Calu3 (cell line): ENCODE measurements at regions of chr4 and their contacts with region 1.

Region 1: GRCh38 chr4:158826057-158826456 is 57.2 kb downstream of the FNIP2 start:
- DNase-seq: no peak
- H3K4me3 Mint-ChIP-seq: peak overlapping the region; percentile 69
- H3K27ac Mint-ChIP-seq: peak overlapping the region; percentile 99
- H3K4me1 Mint-ChIP-seq: peaks cover 78% of the 10 kb centered on the region
- H3K27me3 Mint-ChIP-seq: no peaks in the 10 kb centered on the region
- CTCF ChIP-seq: no peak

Region 2: DNA sequence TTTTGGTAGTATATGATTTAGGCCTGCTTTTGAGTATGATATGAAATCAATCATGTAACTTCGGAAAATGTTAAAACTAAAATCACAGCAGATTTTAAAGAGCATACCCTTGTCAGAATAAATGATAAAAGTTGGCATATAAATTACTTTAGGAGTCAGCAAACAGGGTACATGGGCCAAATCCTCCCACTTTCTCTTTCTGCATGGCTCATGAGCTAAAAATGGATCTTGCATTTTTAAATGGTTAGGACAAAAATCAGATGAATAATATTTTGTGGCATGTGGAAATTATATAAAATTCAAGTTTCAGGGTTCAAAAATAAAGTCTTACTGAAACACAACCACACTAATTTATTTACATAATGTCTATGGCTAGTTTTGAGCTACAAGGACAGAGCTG is 868.2 kb before region 1 on chr4:
- CTCF ChIA-PET with region 1: no interaction called
- intact Hi-C with region 1: no loop called
- DNase-seq: no peak
- H3K4me3 Mint-ChIP-seq: no peak overlapping the region
- H3K27ac Mint-ChIP-seq: no peak overlapping the region
- H3K4me1 Mint-ChIP-seq: no peaks in the 10 kb centered on the region
- H3K27me3 Mint-ChIP-seq: no peaks in the 10 kb centered on the region
- CTCF ChIP-seq: no peak

Region 3: DNA sequence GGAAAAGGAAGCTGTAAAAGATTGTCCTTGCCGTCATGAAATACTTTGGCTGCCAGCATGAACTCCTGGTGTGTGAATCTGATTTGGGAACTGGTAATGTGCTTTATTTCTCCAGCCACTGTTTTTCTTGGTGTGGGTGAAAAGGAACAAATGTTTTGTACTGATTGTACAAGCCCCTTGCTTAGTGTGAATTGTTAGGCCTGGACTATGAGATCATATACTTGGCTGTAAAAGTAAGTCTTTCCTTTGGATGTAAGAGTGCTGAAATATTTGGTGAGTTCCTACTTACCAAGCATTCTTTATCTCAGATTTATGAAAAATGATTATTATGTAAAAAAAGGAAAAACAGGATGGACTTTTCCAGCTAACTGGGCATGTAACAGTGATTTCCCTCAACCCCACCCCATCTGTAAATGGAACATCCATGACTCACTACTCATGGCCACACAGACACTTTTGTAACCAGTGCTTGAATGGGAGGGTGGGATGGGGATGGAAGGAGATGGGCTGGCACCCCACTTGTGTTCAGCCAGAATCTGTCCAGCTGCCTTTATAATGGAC is 50.9 kb before region 1 on chr4:
- CTCF ChIA-PET with region 1: no interaction called
- intact Hi-C with region 1: loop called (anchors 2 kb)
- DNase-seq: no peak
- H3K4me3 Mint-ChIP-seq: peak overlapping the region; percentile 44
- H3K27ac Mint-ChIP-seq: peak overlapping the region; percentile 91
- H3K4me1 Mint-ChIP-seq: peaks cover 40% of the 10 kb centered on the region
- H3K27me3 Mint-ChIP-seq: no peaks in the 10 kb centered on the region
- CTCF ChIP-seq: no peak